ENCODE measurements at regions of chr1 and their contacts with region 1.

Region 1: DNA sequence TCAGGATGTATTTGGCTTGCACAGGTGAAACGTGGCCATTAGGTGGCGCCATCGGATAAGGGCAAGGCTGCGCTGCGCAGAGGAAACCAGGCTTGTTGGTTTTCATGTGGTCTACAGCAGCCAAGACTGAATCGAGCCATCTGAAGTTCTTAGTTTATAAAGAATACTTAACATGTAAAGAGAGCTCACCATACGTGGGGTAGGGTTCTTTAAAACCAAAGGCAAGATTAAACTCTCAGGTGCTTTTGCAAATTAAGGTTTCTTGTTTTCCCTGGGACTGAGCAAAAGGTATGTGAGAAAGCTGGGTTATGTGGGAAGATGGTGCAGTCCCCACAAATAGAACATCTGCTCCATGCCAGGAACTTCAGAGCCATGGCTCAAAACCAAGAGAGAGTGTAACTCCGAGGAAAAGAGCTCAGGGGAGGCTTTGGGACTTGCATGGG is 9.3 kb downstream of the MASP2 start:
- DNase-seq: peak; percentile 77
- H3K4me3 ChIP-seq: no peak overlapping the region
- H3K27ac ChIP-seq: no peak overlapping the region
- H3K27me3 ChIP-seq: peaks cover 5% of the 10 kb centered on the region
- CTCF ChIP-seq: peak; percentile 100

Region 2: DNA sequence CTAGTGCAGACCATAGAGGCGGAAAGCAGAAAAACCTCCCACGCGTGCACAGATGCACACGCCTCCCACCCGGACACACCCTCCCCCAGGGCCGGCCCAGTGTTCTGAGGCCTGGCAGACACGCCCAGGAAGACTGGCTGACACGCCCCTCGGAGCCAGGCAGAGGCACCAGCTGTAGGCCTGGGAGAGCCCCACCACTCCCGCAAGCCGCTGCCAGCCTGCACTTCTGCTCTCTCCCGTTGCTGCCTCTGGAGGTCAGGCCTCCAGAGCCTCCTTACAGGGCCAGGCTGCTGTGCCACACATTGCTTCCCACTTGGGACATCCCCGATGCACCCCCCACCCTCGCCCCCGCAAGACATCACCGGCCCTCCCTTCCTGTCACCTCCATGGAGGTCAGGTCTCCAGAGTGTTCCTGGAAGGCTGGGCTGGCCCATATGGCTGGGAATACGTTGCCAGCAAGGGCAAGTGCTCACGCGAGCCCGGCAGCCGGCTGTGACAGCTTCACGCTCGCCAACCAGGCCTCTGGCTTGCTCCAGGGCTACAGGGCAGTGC is 281.7 kb before region 1 on chr1:
- CTCF ChIA-PET with region 1: no interaction called
- POLR2A ChIA-PET with region 1: no interaction called
- DNase-seq: no peak
- H3K4me3 ChIP-seq: no peak overlapping the region
- H3K27ac ChIP-seq: no peak overlapping the region
- H3K27me3 ChIP-seq: peaks cover 52% of the 10 kb centered on the region
- CTCF ChIP-seq: no peak

Region 3: DNA sequence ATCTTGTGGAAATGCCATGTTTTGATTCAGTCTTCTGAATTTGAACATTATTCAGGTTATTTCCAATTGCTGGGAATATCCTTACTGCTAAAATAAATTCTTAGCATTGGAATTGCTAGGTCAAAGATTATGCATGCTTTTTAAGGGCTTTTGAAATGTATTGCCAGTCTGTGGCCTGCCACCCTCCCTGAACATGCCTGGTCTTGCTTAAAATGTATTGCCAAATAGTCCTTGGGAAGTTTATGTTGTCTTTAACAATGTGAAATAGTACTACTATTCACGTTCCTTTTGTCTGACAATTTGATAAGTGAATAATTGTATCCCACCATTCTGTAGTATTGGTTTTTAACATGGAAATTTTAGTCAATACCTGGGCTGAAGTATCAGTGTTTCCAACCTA is 11.7 kb before region 1 on chr1:
- CTCF ChIA-PET with region 1: interaction called, 21 read pairs
- POLR2A ChIA-PET with region 1: no interaction called
- DNase-seq: no peak
- H3K4me3 ChIP-seq: no peak overlapping the region
- H3K27ac ChIP-seq: no peak overlapping the region
- H3K27me3 ChIP-seq: no peaks in the 10 kb centered on the region
- CTCF ChIP-seq: no peak

Region 4: DNA sequence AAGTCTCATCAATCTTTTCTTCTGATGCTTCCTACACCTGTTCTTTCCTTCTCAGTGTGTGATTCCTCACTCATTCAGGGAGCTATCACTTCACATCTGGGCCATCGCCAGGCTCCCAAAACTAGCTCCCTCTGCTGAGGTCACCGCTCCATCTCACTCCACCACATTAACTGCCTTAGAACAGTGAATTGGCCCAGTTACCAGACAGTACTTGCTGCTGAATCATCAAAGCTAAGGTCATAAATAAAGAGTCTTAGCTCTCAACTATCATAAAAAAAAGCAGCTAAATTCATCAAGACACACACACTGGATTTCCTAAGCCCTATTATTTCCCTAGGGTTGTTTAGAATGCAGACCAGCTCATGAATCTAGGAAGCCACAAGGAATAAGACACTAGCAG is 40.9 kb after region 1 on chr1:
- CTCF ChIA-PET with region 1: interaction called, 30 read pairs
- POLR2A ChIA-PET with region 1: no interaction called
- DNase-seq: no peak
- H3K4me3 ChIP-seq: no peak overlapping the region
- H3K27ac ChIP-seq: no peak overlapping the region
- H3K27me3 ChIP-seq: no peaks in the 10 kb centered on the region
- CTCF ChIP-seq: no peak

Region 5: DNA sequence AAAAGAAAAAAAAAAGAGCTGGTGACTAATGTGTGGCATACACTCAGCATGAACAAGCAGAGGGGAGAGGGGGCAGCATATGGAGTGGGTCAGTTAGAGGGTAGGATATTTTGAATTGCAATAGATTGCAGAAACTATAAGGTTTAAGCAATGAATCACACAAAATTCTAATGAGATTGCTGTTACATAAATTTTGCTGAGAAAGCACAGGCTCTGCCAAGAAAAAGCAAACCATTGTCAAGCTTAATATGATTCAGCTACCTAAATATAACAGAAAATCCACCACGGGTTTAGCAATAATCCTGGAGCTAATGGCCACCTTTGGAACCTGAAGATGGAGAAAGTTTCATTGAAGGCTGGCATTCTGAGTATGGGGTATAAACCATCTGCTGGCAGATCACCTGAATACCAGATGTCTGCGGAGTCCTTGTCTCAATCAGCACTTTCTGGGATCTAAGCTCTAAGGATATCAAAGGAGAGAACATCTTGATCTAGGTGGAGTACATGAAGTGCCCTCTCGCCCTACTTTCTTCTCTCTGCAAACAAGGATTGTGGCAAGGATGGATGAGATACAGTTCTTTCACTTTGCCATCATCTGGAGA is 121.1 kb after region 1 on chr1:
- CTCF ChIA-PET with region 1: interaction called, 15 read pairs
- POLR2A ChIA-PET with region 1: no interaction called
- DNase-seq: peak; percentile 82
- H3K4me3 ChIP-seq: no peak overlapping the region
- H3K27ac ChIP-seq: peak overlapping the region; percentile 96
- H3K27me3 ChIP-seq: no peaks in the 10 kb centered on the region
- CTCF ChIP-seq: no peak

Region 6: DNA sequence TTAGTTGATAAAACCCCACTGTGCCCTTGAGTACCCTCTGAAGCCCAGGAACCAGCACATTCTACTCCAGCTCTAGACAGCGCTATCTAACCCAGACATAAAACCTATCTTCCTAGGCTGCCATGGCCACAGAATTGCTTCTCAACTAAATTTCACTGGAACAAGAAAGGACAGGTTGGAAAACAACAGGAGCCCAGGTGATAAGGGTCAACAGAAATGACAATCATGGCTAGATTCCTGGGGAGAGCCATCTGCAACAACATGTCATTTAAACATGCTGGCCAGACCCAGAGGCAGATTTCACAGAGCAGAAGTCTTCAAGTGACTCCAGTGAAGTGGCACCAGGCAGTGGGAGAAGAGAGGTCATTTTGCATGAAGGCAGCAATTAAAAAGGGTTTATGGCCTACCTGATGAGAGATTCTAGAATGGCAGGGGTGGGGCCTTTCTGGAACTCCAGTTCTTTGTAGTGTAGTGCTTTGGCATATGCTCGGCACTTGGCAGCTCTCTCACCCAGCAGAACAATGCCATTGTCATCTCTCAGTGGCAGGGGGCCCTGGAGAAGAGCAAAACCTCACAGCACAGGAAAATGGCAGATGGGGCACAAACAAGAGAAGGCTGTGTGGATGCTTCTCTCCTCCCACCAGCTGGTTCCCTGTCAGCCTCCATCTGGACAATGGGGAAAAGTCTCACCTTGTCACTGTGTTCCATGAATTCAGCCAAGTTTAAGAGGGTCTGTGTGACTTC is 161.3 kb after region 1 on chr1:
- CTCF ChIA-PET with region 1: interaction called, 12 read pairs
- POLR2A ChIA-PET with region 1: no interaction called
- DNase-seq: no peak
- H3K4me3 ChIP-seq: no peak overlapping the region
- H3K27ac ChIP-seq: no peak overlapping the region
- H3K27me3 ChIP-seq: no peaks in the 10 kb centered on the region
- CTCF ChIP-seq: no peak

Region 7: DNA sequence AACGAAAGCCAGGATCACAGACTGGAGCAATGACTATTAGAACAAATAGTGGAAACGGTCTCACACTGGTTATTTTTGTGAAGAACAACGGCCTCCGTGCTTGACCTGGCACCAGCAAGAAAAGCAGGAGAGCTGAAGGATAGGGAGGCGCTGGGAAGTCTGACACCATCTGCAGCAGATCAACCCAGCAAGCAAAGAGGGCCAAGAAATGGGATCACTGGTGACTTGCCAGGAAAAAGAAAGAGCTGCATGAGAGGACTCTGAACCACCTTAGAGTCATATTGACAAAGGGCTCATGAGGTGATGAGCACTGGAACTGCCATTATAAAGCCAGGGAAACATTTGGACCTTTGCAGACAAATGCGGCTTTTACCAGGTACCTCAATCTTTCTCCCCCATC is 199.6 kb after region 1 on chr1:
- CTCF ChIA-PET with region 1: interaction called, 39 read pairs
- POLR2A ChIA-PET with region 1: no interaction called
- DNase-seq: no peak
- H3K4me3 ChIP-seq: no peak overlapping the region
- H3K27ac ChIP-seq: peak overlapping the region; percentile 31
- H3K27me3 ChIP-seq: no peaks in the 10 kb centered on the region
- CTCF ChIP-seq: no peak